ENCODE measurements at regions of chr19 and their contacts with region 1.

Region 1: DNA sequence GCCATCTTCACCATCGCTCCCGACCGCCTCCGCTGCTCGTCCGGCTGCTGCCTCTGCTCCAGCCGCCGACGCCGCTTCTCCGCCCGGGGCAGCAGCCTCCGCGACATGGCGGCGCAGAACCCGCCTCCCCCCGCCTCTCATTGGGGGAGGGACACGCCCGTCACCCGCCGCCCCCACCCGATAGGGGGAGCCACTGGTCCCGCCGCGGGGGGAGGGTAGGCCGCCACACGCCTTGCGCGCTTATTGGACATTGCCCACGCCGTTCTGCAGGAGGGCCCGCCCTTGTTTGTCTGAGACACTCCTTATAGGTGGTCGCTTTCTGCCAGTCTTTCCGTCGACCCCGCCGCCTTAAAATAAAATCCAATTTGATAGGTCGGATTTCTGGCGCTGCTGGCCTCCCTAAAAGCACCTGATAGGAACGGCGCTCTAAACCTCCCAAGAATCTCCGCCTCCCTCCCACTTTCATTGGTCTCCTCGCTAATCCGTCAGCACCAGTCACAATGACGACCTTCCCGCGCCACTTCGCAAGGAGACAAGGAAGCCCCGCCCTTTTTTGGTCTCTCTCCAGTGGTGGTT is at the start of gene HNRNPL:
- DNase-seq: peak; percentile 99 to 100
- H3K4me3 ChIP-seq: peak within 1 kb of the TSS; percentile 80 to 97 (median 95)
- H3K27ac ChIP-seq: peak within 1 kb of the TSS; percentile 96
- H3K4me1 ChIP-seq: peaks cover 2 to 16% (median 11%) of the 10 kb centered on the region in 4 experiments
- H3K27me3 ChIP-seq: no peaks in the 10 kb centered on the region
- CTCF ChIP-seq: peak; percentile 26 to 48 (median 44)
- EP300 ChIP-seq: no peak; a peak in 1 of 3 replicates
- POLR2A ChIP-seq: peak; percentile 88 to 97
- RAD21 ChIP-seq: no peak
- total RNA-seq, gene HNRNPL: 711 and 779 TPM in 2 replicates

Region 2: GRCh38 chr19:38734426-38735256 is 115.3 kb before region 1 on chr19:
- CTCF ChIA-PET with region 1: no interaction called
- POLR2A ChIA-PET with region 1: interaction called, 11 read pairs
- DNase-seq: no peak
- H3K4me3 ChIP-seq: peak overlapping the region; percentile 39 to 66 (median 50)
- H3K27ac ChIP-seq: no peak overlapping the region
- H3K4me1 ChIP-seq: peaks cover 0 to 15% (median 10%) of the 10 kb centered on the region in 4 experiments; a peak in 6 of 7 replicates
- H3K27me3 ChIP-seq: peaks cover 4 to 16% (median 13%) of the 10 kb centered on the region in 4 experiments
- CTCF ChIP-seq: no peak
- EP300 ChIP-seq: no peak
- POLR2A ChIP-seq: no peak
- RAD21 ChIP-seq: no peak

Region 3: DNA sequence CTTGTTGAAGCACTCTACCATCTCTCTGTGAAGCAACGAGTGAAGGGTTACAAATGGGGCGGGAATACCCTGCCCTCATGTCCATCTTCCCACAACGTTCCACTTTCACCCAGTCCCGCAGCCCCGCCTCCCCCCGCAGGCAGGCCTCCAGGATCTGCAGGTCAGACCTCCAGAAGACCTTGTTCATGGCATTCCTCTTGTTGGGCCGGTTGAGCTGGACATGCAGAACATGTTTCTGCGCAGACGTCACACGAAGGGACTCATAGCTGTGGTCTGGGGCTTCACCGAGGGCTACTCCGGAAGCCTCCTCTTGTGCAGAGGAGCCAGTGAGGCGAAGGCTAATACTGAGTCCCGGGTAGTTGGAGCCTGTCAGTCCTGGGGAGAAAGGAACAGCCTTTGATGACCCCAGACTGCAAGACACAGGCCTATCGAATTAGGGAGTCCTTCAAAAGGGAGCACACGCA is 18.8 kb before region 1 on chr19:
- CTCF ChIA-PET with region 1: interaction called, 5 read pairs
- POLR2A ChIA-PET with region 1: interaction called, 376 read pairs
- DNase-seq: no peak
- H3K4me3 ChIP-seq: peak overlapping the region; percentile 73 to 85 (median 82)
- H3K27ac ChIP-seq: peak overlapping the region; percentile 68; the same call in 1 of the 2 replicates
- H3K4me1 ChIP-seq: peaks cover 0 to 6% (median 1%) of the 10 kb centered on the region in 4 experiments; a peak in 1 of 7 replicates
- H3K27me3 ChIP-seq: no peaks in the 10 kb centered on the region
- CTCF ChIP-seq: no peak
- EP300 ChIP-seq: no peak
- POLR2A ChIP-seq: no peak; a peak in 1 of 3 replicates
- RAD21 ChIP-seq: no peak

Region 4: GRCh38 chr19:38869856-38870607 is 20.1 kb after region 1 on chr19:
- CTCF ChIA-PET with region 1: interaction called, 20 read pairs
- POLR2A ChIA-PET with region 1: interaction called, 35 read pairs
- DNase-seq: peak in 1 of 2 experiments; percentile 91
- H3K4me3 ChIP-seq: peak overlapping the region; percentile 38 to 63 (median 55)
- H3K27ac ChIP-seq: no peak overlapping the region
- H3K4me1 ChIP-seq: peaks cover 0 to 7% (median 4%) of the 10 kb centered on the region in 4 experiments; a peak in 5 of 7 replicates
- H3K27me3 ChIP-seq: peaks cover 0 to 11% (median 5%) of the 10 kb centered on the region in 4 experiments; a peak in 5 of 7 replicates
- CTCF ChIP-seq: peak; percentile 63 to 80 (median 73)
- EP300 ChIP-seq: peak in 1 of 2 experiments; percentile 66; a peak in 1 of 3 replicates
- POLR2A ChIP-seq: no peak
- RAD21 ChIP-seq: peak; percentile 22 to 57

Region 5: DNA sequence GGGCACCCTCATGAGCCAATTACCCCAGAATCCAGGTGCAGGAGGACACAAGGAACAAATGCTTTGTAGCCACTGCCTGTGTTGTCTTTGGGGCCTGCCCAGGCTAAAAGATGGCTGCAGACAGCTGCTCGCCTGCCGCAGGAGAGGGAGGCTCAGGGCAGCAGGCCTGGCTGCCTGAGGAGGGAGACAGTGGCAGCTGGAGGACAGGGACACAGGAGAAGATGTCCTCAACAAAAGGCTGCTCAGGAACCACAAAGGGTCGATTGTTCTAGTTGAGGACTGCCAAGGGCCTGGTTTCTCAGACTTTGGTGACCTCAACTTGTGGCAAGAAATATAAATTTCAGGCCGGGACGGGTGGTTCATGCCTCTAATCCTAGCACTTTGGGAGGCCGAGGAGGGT is 41.8 kb after region 1 on chr19:
- CTCF ChIA-PET with region 1: interaction called, 21 read pairs
- POLR2A ChIA-PET with region 1: interaction called, 30 read pairs
- DNase-seq: no peak
- H3K4me3 ChIP-seq: no peak overlapping the region
- H3K27ac ChIP-seq: no peak overlapping the region
- H3K4me1 ChIP-seq: no peaks in the 10 kb centered on the region
- H3K27me3 ChIP-seq: no peaks in the 10 kb centered on the region
- CTCF ChIP-seq: no peak
- EP300 ChIP-seq: no peak
- POLR2A ChIP-seq: no peak
- RAD21 ChIP-seq: no peak

Measured in H1 (cell line).